Vagina (tissue), 2 donors: ENCODE measurements at regions of chr22 and their contacts with region 1.

Region 1: DNA sequence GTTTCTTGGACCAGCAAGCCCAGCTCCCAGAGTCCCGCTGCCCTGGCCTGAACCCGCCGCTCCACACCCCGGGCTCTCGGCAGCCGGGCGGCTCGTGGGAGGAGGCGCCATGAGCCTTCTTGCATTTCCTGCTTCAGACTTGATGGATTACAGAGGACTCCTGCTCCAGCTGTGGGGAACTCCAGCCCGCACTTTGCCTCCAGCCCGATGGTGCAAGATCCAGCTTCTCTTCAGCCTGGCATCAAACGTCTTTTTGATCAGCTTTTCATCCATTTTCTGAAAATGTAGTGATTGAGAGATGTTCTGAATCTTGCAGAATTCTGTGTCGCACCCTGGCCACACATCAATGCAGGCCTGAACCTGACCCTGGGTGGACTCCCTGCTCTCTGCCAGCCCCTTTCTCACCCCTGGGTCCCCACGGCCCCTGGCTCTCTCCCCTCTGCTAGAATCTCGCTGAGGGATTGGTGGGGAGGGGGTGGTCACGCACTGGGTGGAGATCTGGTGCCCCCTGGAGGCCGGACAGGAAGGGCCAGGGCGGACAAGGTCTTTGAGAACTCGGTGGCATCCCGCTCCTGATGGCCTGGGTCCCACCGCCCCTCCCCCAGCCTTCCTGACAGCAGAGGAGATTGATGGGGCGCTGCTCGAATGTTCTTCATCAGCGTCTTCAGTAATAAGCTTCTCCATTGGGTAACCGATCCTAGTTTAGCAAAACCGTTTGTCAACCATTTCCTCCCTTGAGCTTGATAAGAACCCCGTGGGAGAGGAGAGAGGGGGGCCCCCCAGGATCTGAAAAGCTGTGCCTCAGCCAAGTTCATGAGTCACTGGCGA is 12.1 kb upstream of the NFAM1 start:
- DNase-seq: no peak
- H3K4me3 ChIP-seq: peak overlapping the region; percentile 38 to 47
- H3K27ac ChIP-seq: peak overlapping the region; percentile 85
- H3K4me1 ChIP-seq: peaks cover 30% of the 10 kb centered on the region
- H3K27me3 ChIP-seq: no peaks in the 10 kb centered on the region
- CTCF ChIP-seq: peak; percentile 8 to 61 (median 48)
- POLR2A ChIP-seq: peak in 1 of 2 donors; percentile 27

Region 2: GRCh38 chr22:41308054-41308453 is 1136.2 kb before region 1 on chr22:
- intact Hi-C with region 1: no loop called
- DNase-seq: no peak
- H3K4me3 ChIP-seq: no peak overlapping the region
- H3K27ac ChIP-seq: peak overlapping the region; percentile 68
- H3K4me1 ChIP-seq: peaks cover 54% of the 10 kb centered on the region
- H3K27me3 ChIP-seq: no peaks in the 10 kb centered on the region
- CTCF ChIP-seq: no peak
- POLR2A ChIP-seq: no peak

Region 3: DNA sequence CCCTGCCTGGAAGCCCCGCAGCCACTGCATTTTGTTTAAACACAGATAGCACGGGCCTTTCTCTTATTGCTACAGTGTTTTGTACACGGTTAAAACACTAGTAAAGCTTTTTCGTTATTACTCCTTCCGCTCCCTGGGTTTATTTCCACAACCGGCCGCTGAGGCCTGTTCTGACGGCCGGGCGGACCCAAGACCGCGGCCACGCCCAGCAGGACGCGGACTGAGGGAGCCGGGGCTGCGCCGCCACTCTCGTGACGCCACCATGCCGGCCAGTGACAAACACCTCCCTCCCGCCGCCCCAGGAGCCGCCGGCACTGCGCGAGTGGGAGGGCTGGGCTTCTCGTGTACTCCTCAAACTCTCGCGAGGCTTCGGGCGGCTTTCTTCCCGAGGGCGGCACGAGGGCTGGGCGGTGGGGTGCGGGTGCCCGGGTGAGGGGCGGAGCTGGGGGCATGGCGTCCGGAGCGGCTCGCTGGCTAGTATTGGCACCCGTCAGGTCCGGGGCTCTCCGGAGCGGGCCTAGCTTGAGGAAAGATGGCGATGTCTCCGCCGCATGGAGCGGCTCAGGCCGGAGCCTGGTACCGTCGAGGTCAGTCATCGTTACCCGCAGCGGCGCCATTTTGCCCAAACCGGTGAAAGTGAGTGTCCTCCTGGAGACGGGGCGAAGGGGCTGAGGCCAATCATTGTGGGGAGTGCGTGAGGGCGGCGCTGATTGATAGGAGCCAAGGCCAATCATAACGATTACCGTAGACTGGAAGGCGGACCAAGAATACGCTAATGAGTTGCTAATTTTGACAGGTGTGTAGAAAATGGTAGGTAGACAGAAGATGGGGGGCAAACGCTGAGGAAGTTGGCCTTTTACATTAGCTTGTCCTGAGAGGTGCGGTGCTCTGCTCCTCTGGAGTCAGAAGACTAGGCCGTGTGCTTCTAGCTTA is 364.7 kb before region 1 on chr22 and contains the start of gene SMDT1:
- intact Hi-C with region 1: loop called (anchors 10 kb)
- DNase-seq: peak in 1 of 2 donors; percentile 99
- H3K4me3 ChIP-seq: peak within 1 kb of the TSS; percentile 60 to 80
- H3K27ac ChIP-seq: peak within 1 kb of the TSS; percentile 98
- H3K4me1 ChIP-seq: peaks cover 50% of the 10 kb centered on the region
- H3K27me3 ChIP-seq: no peaks in the 10 kb centered on the region
- CTCF ChIP-seq: no peak
- POLR2A ChIP-seq: peak in 1 of 2 donors; percentile 88
- total RNA-seq, gene SMDT1: 40.3 TPM